ENCODE measurements at regions of chr6 and their contacts with region 1.

Region 1: GRCh38 chr6:11328613-11329247 is 96.3 kb upstream of the NEDD9 start:
- DNase-seq: no peak
- H3K4me3 ChIP-seq: no peak overlapping the region
- H3K27ac ChIP-seq: no peak overlapping the region
- H3K4me1 ChIP-seq: no peaks in the 10 kb centered on the region
- H3K27me3 ChIP-seq: no peaks in the 10 kb centered on the region
- CTCF ChIP-seq: no peak
- EP300 ChIP-seq: no peak
- POLR2A ChIP-seq: no peak

Region 2: DNA sequence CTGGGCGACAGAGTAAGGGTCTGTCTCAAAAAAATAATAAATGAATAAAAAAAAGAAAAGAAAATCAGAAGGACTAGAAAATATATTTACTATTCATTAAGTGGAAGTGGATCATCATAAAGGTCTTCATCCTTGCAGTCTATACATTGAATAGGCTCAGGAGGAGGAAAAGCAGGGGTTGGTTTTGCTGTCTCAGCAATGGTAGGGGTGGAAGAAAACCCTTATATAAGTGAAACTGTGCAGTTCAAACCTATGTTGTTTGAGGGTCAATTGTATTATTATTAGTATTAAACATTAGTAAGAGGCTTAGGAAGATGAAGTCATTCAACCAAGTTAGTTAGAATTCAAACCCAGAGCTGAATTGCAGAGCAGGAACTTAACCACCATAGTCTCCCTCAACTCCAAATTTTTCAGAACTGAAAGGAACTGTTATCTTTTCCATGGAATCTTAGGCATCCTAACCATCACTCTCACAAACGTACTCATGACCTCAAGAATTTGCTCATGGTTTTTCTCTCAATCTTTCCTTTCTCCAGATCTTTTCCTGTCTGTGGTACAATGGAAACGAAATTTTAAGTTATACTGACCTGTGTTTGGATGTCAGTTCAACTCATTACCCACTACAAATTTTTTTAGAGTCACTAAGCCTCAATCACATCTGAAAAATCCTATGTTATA is 242.8 kb before region 1 on chr6:
- intact Hi-C with region 1: no loop called
- DNase-seq: no peak
- H3K4me3 ChIP-seq: no peak overlapping the region
- H3K27ac ChIP-seq: no peak overlapping the region
- H3K4me1 ChIP-seq: no peaks in the 10 kb centered on the region
- H3K27me3 ChIP-seq: no peaks in the 10 kb centered on the region
- CTCF ChIP-seq: no peak
- EP300 ChIP-seq: no peak
- POLR2A ChIP-seq: no peak

Region 3: DNA sequence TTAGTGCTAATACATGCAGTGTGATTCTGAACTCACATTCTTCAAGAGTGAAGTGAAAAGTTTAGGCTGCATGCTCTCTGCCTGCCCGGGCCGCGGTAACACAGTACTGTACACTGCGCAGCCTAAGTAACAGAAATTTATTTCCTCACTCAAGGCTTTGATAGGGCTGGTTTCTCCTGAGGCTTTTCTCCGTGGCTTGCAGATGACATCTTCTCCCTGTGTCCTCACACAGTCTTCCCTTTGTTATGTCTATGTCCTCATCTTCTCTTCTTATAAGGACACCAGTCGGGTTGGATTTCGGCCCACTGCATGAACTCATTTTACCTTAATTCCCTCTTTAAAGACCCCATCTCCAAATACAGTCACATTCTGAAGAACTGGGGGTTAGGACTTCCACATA is 157.8 kb after region 1 on chr6:
- intact Hi-C with region 1: loop called in 1 of 4 experiments (anchors 2 kb)
- DNase-seq: no peak
- H3K4me3 ChIP-seq: no peak overlapping the region
- H3K27ac ChIP-seq: no peak overlapping the region
- H3K4me1 ChIP-seq: peaks cover 2% of the 10 kb centered on the region
- H3K27me3 ChIP-seq: no peaks in the 10 kb centered on the region
- CTCF ChIP-seq: no peak
- EP300 ChIP-seq: no peak
- POLR2A ChIP-seq: no peak